Vagina (tissue), 2 donors: ENCODE measurements at regions of chr1 and their contacts with region 1.

Region 1: DNA sequence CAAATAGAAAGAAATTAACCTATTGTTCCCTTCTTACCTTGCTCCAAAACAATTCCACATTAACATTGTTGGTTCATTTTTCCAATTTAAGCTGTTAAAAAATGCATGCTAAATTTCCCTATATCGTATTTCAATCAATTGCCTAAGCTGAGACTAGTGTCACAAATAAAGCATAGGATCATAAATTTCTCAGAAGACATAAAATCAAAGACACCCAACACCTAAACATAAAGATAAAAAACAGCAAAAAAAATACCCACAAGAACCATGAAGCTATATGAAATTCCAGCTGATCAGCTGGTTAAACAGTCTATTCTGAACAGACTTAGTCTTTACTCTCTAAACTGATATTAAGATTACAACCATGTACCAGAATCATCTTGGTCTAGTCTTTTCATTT is 32.3 kb downstream of the ACBD6 start:
- DNase-seq: no peak
- H3K4me3 ChIP-seq: no peak overlapping the region
- H3K27ac ChIP-seq: no peak overlapping the region
- H3K4me1 ChIP-seq: no peaks in the 10 kb centered on the region
- H3K27me3 ChIP-seq: no peaks in the 10 kb centered on the region
- CTCF ChIP-seq: no peak
- POLR2A ChIP-seq: no peak

Region 2: DNA sequence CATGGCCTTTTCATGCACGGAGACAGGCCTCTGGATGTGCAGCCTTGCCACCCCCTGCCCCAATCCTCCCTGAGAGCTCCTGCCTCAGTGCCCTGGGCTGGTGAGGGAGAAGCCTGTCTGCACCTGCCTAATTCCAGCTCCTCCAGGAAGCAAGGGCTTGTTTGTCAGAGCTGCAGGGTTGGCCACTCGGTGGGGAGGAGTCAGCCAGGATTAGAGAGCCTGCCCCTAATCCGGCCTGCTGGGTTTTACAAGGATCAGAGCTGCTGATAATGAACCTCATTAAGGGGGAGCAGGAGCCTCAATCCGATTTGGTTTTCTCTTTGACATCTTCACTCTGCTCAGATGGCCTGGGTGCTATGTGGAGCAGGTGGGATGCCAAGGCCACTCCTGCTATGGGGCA is 271.8 kb before region 1 on chr1:
- intact Hi-C with region 1: loop called (anchors 10 kb)
- DNase-seq: no peak
- H3K4me3 ChIP-seq: no peak overlapping the region
- H3K27ac ChIP-seq: no peak overlapping the region
- H3K4me1 ChIP-seq: no peaks in the 10 kb centered on the region
- H3K27me3 ChIP-seq: no peaks in the 10 kb centered on the region
- CTCF ChIP-seq: no peak
- POLR2A ChIP-seq: no peak

Region 3: GRCh38 chr1:180252638-180253536 is 217.1 kb before region 1 on chr1:
- intact Hi-C with region 1: loop called (anchors 10 kb)
- DNase-seq: no peak
- H3K4me3 ChIP-seq: no peak overlapping the region
- H3K27ac ChIP-seq: no peak overlapping the region
- H3K4me1 ChIP-seq: no peaks in the 10 kb centered on the region
- H3K27me3 ChIP-seq: no peaks in the 10 kb centered on the region
- CTCF ChIP-seq: peak; percentile 45 to 65 (median 60)
- POLR2A ChIP-seq: no peak